ENCODE measurements at regions of chr20 and their contacts with region 1.

Region 1: GRCh38 chr20:35994994-35995453 is 26.6 kb downstream of the CNBD2 start:
- DNase-seq: peak; percentile 90
- ATAC-seq: peak; percentile 93
- H3K4me3 ChIP-seq: no peak overlapping the region
- H3K27ac ChIP-seq: no peak overlapping the region
- H3K4me1 ChIP-seq: no peaks in the 10 kb centered on the region
- H3K27me3 ChIP-seq: no peaks in the 10 kb centered on the region
- CTCF ChIP-seq: peak; percentile 94

Region 2: GRCh38 chr20:35726759-35727711 is 268.0 kb before region 1 on chr20:
- CTCF ChIA-PET with region 1: no interaction called
- POLR2A ChIA-PET with region 1: no interaction called
- intact Hi-C with region 1: no loop called
- DNase-seq: no peak
- ATAC-seq: no peak
- H3K4me3 ChIP-seq: no peak overlapping the region
- H3K27ac ChIP-seq: no peak overlapping the region
- H3K4me1 ChIP-seq: no peaks in the 10 kb centered on the region
- H3K27me3 ChIP-seq: no peaks in the 10 kb centered on the region
- CTCF ChIP-seq: no peak

Region 3: GRCh38 chr20:35968931-35969330 is 26.1 kb before region 1 on chr20:
- CTCF ChIA-PET with region 1: interaction called, 3 read pairs
- POLR2A ChIA-PET with region 1: interaction called, 19 read pairs
- intact Hi-C with region 1: no loop called
- DNase-seq: peak; percentile 44
- ATAC-seq: peak; percentile 35; the same call in 1 of the 2 replicates
- H3K4me3 ChIP-seq: no peak overlapping the region
- H3K27ac ChIP-seq: no peak overlapping the region
- H3K4me1 ChIP-seq: peaks cover 5% of the 10 kb centered on the region; the same call in 1 of the 2 replicates
- H3K27me3 ChIP-seq: no peaks in the 10 kb centered on the region
- CTCF ChIP-seq: no peak

Region 4: GRCh38 chr20:36064658-36065426 is 69.8 kb after region 1 on chr20:
- CTCF ChIA-PET with region 1: interaction called, 10 read pairs
- POLR2A ChIA-PET with region 1: interaction called, 3 read pairs
- intact Hi-C with region 1: no loop called
- DNase-seq: peak; percentile 89
- ATAC-seq: peak; percentile 97
- H3K4me3 ChIP-seq: peak overlapping the region; percentile 74
- H3K27ac ChIP-seq: no peak overlapping the region
- H3K4me1 ChIP-seq: peaks cover 26% of the 10 kb centered on the region
- H3K27me3 ChIP-seq: no peaks in the 10 kb centered on the region
- CTCF ChIP-seq: no peak

Region 5: GRCh38 chr20:36144336-36144735 is 149.3 kb after region 1 on chr20:
- CTCF ChIA-PET with region 1: interaction called, 78 read pairs
- POLR2A ChIA-PET with region 1: no interaction called
- intact Hi-C with region 1: no loop called
- DNase-seq: peak; percentile 8
- ATAC-seq: peak; percentile 50; the same call in 1 of the 2 replicates
- H3K4me3 ChIP-seq: no peak overlapping the region
- H3K27ac ChIP-seq: no peak overlapping the region
- H3K4me1 ChIP-seq: no peaks in the 10 kb centered on the region
- H3K27me3 ChIP-seq: no peaks in the 10 kb centered on the region
- CTCF ChIP-seq: no peak

Measured in PC-3 (cell line).